ENCODE measurements at regions of chr6 and their contacts with region 1.

Region 1: GRCh38 chr6:83067448-83068413 is at the start of gene DOP1A:
- DNase-seq: peak; percentile 44
- H3K4me3 ChIP-seq: peak within 1 kb of the TSS; percentile 87
- CTCF ChIP-seq: peak; percentile 95

Region 2: DNA sequence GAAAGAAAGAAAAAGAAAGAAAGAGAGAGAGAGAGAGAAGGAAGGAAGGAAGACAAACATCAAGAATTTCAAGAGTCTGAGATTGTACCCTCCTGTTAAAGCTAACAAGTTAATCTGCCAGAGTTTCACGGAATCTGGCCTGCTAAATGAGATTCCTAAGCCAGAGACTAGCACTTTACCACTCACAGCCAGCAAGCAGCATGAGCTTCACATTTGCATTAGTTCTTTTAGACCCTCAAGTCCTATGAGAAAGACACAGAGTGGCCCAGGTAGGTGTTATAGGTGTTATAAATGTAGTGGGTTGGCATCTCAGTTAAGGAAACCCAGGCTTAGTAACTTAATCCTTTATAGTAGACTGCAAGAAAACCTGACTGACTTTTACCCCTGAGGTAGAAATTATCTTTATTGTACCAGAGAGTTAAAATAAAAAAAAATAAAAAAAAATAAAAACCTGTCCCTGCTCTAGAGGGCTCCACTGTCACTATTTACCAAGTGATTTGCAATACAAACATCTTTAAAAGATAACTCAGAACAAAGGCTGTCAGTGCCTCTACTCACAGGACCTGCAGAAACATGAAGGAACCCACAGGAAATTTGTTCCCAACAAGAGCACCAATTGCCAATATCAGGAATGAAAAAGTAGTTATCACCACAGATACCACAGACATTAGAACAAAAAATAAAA is 810.5 kb before region 1 on chr6:
- CTCF ChIA-PET with region 1: interaction called, 95 read pairs
- POLR2A ChIA-PET with region 1: no interaction called
- DNase-seq: no peak
- H3K4me3 ChIP-seq: no peak overlapping the region
- CTCF ChIP-seq: no peak

Region 3: DNA sequence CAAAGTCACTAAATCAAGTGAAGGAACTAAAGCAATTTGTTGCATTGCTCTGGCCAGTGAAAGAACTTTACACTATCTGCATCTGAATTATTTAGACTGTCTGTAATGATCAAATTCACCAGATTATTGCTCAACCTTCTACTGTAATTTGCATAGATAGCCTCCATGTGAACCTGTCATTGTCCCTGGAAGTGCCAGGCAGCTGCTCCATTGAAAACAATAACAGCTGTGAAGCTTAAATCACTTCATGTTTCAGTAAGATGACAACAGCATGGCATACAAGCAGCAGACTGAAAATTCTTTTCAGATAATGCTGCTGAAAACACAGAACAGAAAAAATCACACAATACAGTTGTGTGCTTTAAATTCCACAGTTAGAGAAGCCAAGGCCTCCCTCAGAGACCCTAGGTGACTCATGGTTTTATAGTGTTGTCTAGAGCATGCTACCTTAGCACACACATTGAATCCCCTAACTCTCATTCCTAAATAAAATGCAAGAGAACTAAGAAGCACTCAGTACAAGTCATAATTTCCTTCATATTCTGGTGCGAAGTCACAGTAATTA is 455.2 kb before region 1 on chr6:
- CTCF ChIA-PET with region 1: no interaction called
- POLR2A ChIA-PET with region 1: no interaction called
- DNase-seq: no peak
- H3K4me3 ChIP-seq: no peak overlapping the region
- CTCF ChIP-seq: no peak

Region 4: DNA sequence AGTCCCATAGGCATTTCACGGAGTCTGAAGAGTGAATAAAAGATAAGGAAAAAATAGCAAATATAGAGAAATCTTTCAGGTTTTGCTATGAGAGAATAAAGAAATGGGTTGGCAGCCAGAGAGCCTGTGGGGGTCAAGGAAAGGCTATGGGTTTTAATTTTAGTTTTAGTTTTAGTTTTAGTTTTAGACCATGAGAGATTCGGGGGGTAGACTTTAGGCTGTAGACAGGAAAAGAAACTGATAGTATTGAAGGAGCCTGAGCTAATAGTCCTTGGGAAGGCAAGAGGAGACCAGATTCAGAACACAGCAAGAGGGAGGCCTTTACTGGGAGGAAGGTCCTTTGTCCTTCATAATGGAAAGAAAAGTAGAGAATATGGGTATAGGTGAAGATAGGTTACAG is 19.0 kb after region 1 on chr6:
- CTCF ChIA-PET with region 1: interaction called, 71 read pairs
- POLR2A ChIA-PET with region 1: no interaction called
- DNase-seq: no peak
- H3K4me3 ChIP-seq: no peak overlapping the region
- CTCF ChIP-seq: no peak

Region 5: GRCh38 chr6:83119742-83120300 is 52.1 kb after region 1 on chr6:
- CTCF ChIA-PET with region 1: interaction called, 44 read pairs
- POLR2A ChIA-PET with region 1: no interaction called
- DNase-seq: no peak
- H3K4me3 ChIP-seq: no peak overlapping the region
- CTCF ChIP-seq: no peak

Region 6: GRCh38 chr6:83176246-83176645 is 108.5 kb after region 1 on chr6:
- CTCF ChIA-PET with region 1: interaction called, 28 read pairs
- POLR2A ChIA-PET with region 1: no interaction called
- DNase-seq: no peak
- H3K4me3 ChIP-seq: no peak overlapping the region
- CTCF ChIP-seq: no peak

Region 7: DNA sequence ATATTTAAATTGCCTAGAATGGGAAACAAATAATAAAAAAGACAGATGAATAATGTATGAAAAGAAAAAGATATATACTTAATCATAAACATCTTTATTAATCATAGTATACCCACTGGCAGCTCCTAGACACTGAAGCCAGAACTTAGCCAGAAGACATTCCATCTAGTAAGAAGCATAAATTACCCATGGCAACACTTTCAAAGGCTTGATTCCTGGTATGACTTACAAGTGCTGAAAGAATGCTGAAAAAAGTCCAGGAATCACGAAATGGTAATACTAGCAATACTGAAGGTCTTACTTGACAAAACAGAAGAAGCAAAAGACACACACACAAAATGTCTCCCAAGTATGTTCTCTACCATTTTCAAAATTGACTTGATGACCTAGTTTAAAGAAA is 163.4 kb after region 1 on chr6:
- CTCF ChIA-PET with region 1: interaction called, 24 read pairs
- POLR2A ChIA-PET with region 1: no interaction called
- DNase-seq: peak; percentile 85
- H3K4me3 ChIP-seq: no peak overlapping the region
- CTCF ChIP-seq: no peak

Region 8: GRCh38 chr6:83505356-83505755 is 437.6 kb after region 1 on chr6:
- CTCF ChIA-PET with region 1: interaction called, 345 read pairs
- POLR2A ChIA-PET with region 1: no interaction called
- DNase-seq: no peak
- H3K4me3 ChIP-seq: no peak overlapping the region
- CTCF ChIP-seq: no peak